ENCODE measurements at regions of chr1 and their contacts with region 1.

Region 1: DNA sequence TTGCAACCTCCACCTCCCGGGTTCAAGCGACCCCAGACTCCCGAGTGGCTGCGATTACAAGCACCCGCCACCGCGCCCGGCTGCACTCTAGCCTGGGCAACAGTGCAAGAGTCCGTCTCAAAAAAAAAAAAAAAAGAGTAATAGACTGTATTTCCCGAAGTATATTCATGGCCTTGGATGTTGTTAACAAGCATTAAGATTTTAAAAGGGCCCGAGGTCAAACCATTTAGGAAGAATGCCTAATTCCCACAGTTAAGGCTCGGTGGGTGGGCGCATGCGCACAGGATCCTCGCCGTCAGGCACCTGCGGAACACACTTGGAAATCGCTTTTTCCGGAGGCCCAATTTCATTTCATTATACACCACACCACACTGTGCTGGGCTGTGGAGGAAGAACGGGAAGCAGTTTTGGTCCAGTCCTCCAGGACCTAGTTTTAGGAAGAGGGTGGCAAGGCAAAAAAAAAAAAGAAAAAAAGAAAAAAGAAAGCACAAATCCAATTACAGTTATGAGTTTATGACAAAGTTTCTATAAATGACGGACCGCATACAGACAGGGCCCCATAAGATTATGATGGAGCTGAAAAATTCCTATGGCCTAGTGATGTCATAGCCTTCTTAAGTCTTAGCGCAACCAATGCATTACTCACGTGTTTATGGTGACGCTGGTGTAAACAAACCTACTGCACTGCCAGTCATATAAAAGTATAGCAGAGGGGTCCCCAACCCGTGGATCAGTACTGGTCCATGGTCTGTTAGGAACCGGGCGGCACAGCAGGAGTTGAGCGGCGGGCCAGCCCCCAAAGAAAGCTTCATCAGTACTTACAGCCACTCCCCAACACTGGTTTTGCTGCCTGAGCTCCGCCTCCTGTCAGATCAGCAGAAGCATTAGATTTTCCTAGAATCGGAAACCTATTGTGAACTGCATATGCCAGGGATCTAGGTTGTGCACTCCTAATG is 38.2 kb downstream of the H3-3A start:
- DNase-seq: no peak
- H3K4me3 Mint-ChIP-seq: peak overlapping the region; percentile 78
- H3K27ac Mint-ChIP-seq: no peak overlapping the region
- H3K4me1 Mint-ChIP-seq: peaks cover 16% of the 10 kb centered on the region
- H3K27me3 Mint-ChIP-seq: peaks cover 8% of the 10 kb centered on the region

Region 2: DNA sequence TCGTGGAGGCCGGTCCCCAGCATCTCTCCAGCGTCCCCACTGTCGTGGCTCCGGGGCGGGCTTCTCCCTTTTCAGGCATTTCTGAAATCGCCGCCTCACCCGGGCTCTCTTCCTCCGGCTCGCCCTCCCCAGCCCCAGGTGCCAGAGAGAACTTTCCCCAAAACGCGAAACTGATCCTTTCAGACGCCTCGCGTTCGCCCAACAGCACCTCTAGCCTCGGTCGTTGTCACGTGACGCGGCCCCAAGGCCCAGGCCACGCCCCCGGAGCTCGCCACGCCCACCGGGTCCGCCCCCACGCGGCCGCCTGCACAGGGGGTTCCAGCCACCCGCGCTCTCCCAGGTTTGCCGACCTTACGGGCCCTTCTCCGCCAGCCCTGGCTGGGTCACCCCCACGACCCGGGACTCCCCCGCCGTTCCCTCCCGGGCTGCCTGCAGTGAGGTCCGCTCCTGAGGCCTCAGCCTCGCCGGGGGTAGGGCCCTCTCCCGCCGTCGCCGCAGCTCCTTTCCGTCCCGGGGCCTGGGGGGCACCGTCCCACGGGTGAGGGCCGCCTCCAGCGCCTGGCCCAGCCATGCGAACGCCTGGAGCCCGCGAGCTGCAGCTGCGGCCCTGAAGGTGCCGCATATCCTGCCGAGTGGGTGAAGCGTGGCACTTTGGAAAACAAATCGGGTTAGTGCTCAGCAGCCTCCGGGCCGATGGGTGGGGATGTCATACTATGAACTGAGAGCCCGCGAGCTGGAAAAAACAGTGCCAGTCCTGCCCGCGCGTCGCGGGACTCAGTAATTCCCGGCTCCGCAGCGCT is 17.2 kb before region 1 on chr1:
- intact Hi-C with region 1: loop called (anchors 1 kb)
- DNase-seq: peak; percentile 91
- H3K4me3 Mint-ChIP-seq: peak overlapping the region; percentile 89
- H3K27ac Mint-ChIP-seq: peak overlapping the region; percentile 79
- H3K4me1 Mint-ChIP-seq: peaks cover 12% of the 10 kb centered on the region
- H3K27me3 Mint-ChIP-seq: peaks cover 15% of the 10 kb centered on the region